AG04449 (cell line): ENCODE measurements at regions of chr1 and their contacts with region 1.

Region 1: GRCh38 chr1:222455188-222455879 is 92.6 kb downstream of the HHIPL2 start:
- DNase-seq: peak; percentile 78
- H3K4me3 ChIP-seq: peak overlapping the region; percentile 48
- CTCF ChIP-seq: peak; percentile 92

Region 2: GRCh38 chr1:221478050-221478949 is 977.0 kb before region 1 on chr1:
- CTCF ChIA-PET with region 1: interaction called, 56 read pairs
- POLR2A ChIA-PET with region 1: interaction called, 5 read pairs
- DNase-seq: peak; percentile 63
- H3K4me3 ChIP-seq: no peak overlapping the region
- CTCF ChIP-seq: peak; percentile 96

Region 3: GRCh38 chr1:221741711-221742554 is 713.4 kb before region 1 on chr1 and contains the start of gene DUSP10:
- CTCF ChIA-PET with region 1: interaction called, 51 read pairs
- POLR2A ChIA-PET with region 1: interaction called, 16 read pairs
- DNase-seq: peak; percentile 99
- H3K4me3 ChIP-seq: peak within 1 kb of the TSS; percentile 92
- CTCF ChIP-seq: no peak

Region 4: DNA sequence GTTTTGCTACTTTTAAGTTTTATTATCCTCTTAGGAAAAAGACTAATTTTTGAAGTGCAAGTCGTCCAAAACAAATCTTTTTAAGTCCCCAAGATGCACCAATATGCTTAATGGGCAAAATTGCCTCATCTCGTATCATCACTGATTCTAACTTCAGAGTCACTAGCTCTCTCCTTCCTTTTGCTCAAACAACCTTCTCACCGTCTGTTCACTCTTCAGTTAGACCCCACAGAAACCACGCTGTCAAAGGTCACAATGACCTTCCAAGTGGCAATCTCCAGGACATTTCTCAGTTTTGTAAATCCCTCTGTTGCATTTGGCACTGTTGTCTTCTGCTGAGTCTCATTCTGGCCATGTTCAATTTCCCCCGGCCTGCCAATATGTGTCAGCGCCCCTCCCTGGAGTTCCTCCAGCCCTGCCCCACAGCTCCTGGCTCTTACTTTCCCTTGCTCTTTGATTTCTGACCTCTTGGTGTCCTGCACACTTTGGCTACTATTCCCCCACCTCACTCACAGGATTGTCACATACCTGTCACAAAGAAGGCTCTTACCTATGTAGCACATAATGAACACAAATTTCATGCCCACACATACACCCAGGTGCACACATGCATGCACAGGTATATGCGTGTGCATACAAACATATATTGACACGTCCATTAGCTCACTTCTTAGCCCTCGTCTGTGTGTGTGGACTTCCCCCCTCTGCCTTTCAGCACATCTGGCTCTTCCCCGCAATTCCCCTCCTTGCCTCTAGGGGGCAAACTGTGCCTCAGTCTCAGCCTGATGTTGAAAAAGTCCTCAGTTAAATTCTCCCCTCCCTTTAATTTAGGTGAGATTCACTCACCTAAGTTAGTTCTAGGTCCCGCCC is 359.5 kb before region 1 on chr1:
- CTCF ChIA-PET with region 1: interaction called, 10 read pairs
- POLR2A ChIA-PET with region 1: no interaction called
- DNase-seq: no peak
- H3K4me3 ChIP-seq: no peak overlapping the region
- CTCF ChIP-seq: peak; percentile 55

Region 5: GRCh38 chr1:222240536-222241181 is 214.7 kb before region 1 on chr1:
- CTCF ChIA-PET with region 1: interaction called, 10 read pairs
- POLR2A ChIA-PET with region 1: no interaction called
- DNase-seq: peak; percentile 37
- H3K4me3 ChIP-seq: no peak overlapping the region
- CTCF ChIP-seq: no peak

Region 6: DNA sequence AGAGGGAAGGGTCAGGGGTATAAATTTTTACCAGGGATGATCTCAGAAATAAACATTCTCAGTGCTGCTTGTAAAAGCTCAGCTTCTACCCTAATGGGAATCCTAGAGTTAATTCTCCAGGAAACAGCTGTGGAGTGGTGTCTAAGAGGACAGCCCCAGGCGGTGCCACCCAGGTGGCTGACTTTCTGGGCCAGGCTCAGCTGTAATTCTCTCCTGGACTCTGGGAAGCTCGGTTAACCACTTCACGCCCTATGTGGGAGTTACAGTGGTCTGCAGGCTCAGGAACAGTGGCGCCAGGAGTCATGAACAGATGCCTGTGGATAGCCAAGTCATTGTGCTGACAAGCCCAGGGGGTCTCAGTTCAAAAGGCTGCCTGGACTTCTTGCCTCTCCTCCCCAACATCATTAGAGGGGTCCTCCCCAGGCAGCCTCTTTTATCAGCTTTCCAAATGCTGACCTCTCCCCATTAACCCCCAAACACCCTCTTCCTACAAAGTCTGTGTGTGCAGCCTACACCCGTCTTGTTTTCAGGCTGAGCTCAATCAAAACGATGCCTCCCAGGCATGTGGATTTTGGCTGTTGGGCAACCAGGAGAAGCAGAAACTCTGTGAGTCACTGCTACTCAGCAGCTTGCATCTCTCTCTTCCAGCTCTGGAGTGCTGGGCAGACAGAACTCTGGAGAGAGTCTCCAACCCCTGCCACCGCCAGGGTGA is 91.4 kb after region 1 on chr1:
- CTCF ChIA-PET with region 1: no interaction called
- POLR2A ChIA-PET with region 1: no interaction called
- DNase-seq: peak; percentile 45
- H3K4me3 ChIP-seq: peak overlapping the region; percentile 40
- CTCF ChIP-seq: peak; percentile 10

Region 7: DNA sequence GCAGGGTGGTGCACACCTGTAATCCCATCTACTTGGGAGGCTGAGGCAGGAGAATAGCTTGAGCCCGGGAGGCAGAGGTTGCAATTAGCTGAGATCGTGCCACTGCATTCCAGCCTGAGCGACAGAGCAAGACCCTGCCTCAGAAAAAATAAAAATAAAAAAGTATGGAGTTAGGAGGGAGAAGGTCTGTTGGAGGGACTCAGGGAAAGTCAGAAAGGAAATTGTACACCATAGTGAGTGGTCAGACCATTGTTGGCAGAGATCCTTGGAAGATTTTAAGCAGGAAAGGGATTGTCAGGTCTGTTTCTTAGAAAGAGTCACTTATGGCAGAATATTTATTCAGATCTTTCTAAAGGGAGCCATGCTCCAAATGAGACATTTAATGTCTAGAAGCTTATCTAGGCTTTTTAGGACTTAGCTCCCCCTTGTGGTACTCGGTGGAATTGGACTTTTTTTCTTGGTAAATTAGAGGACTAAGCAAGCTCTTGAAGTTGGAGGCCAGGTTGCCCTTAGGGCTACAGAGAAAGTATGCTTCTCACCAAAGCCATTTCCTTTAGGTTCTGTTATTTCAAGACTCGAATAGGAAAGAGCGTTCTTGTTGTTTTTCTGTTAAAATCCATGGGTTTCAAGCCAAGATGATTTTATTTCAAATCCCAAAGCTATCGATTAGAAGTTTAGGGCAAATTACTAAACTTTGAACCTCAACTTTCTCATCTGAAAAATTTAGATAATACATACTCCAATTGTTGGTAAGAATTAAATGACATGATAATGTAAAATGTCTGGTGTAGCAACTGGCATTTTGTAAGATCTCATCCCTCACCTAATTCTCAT is 179.1 kb after region 1 on chr1:
- CTCF ChIA-PET with region 1: interaction called, 16 read pairs
- POLR2A ChIA-PET with region 1: no interaction called
- DNase-seq: peak; percentile 65
- H3K4me3 ChIP-seq: no peak overlapping the region
- CTCF ChIP-seq: peak; percentile 68